Aorta (tissue), 5 donors: ENCODE measurements at regions of chr9 and their contacts with region 1.

Region 1: GRCh38 chr9:118652912-118653311 is 716.3 kb downstream of the BRINP1 start:
- DNase-seq: no peak
- ATAC-seq: no peak
- H3K4me3 ChIP-seq: no peak overlapping the region
- H3K27ac ChIP-seq: no peak overlapping the region
- H3K4me1 ChIP-seq: no peaks in the 10 kb centered on the region
- H3K27me3 ChIP-seq: no peaks in the 10 kb centered on the region

Region 2: DNA sequence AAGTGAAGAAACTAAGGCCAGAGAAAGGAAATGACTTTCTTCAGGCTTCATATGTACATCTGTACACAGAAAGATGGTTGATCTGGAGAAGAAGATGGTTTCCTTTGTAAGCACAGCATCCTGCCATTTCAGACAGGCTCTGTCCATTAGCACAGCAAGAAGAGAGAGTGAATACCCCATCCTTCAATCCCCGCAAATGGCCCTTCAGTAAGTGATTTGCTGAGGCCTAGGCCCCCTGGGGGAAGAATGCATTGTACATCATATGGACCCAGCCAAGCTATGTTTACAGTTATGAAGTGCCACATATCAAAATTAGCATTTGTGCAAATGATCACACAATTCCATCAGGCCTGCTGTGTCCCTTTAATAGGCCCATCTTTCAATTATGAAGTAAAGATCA is 58.9 kb after region 1 on chr9:
- intact Hi-C with region 1: loop called in 1 of 2 experiments (anchors 10 kb)
- DNase-seq: no peak
- ATAC-seq: no peak
- H3K4me3 ChIP-seq: no peak overlapping the region
- H3K27ac ChIP-seq: no peak overlapping the region
- H3K4me1 ChIP-seq: no peaks in the 10 kb centered on the region
- H3K27me3 ChIP-seq: no peaks in the 10 kb centered on the region